Tibial artery (tissue), 4 donors: ENCODE measurements at regions of chr14 and their contacts with region 1.

Region 1: GRCh38 chr14:42517806-42518500 is 911.3 kb downstream of the LRFN5 start:
- DNase-seq: no peak
- H3K4me3 ChIP-seq: no peak overlapping the region
- H3K27ac ChIP-seq: no peak overlapping the region
- H3K4me1 ChIP-seq: no peaks in the 10 kb centered on the region
- H3K27me3 ChIP-seq: no peaks in the 10 kb centered on the region
- CTCF ChIP-seq: no peak

Region 2: DNA sequence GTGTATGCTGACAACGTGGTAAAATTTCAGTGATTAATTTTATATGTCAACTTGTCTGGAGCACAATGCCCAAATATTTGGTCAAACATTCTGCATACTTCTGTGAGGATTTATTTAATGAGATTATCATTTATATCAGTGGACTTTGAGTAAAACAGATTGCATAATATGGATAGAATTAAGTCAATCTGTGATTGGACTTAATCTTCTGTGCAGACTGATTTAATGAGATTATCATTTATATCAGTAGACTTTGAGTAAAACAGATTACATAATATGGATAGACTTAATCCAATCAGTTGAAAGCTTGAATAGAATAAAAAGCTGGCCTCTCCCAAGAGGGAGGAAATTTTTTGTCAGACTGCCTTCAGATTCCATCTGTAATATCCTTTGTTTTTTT is 501.9 kb after region 1 on chr14:
- intact Hi-C with region 1: no loop called
- DNase-seq: no peak
- H3K4me3 ChIP-seq: no peak overlapping the region
- H3K27ac ChIP-seq: no peak overlapping the region
- H3K4me1 ChIP-seq: no peaks in the 10 kb centered on the region
- H3K27me3 ChIP-seq: no peaks in the 10 kb centered on the region
- CTCF ChIP-seq: no peak

Region 3: GRCh38 chr14:43934102-43934501 is 1416.1 kb after region 1 on chr14:
- intact Hi-C with region 1: loop called (anchors 5 kb)
- DNase-seq: no peak
- H3K4me3 ChIP-seq: no peak overlapping the region
- H3K27ac ChIP-seq: no peak overlapping the region
- H3K4me1 ChIP-seq: no peaks in the 10 kb centered on the region
- H3K27me3 ChIP-seq: no peaks in the 10 kb centered on the region
- CTCF ChIP-seq: no peak